ENCODE measurements at regions of chr5 and their contacts with region 1.

Region 1: GRCh38 chr5:122500245-122501075 is 188.4 kb downstream of the SNCAIP start:
- DNase-seq: peak; percentile 72
- ATAC-seq: peak; percentile 92
- H3K4me3 ChIP-seq: no peak overlapping the region
- H3K27ac ChIP-seq: no peak overlapping the region
- H3K4me1 ChIP-seq: peaks cover 2% of the 10 kb centered on the region; the same call in 1 of the 2 replicates
- H3K27me3 ChIP-seq: peaks cover 2% of the 10 kb centered on the region
- CTCF ChIP-seq: peak; percentile 70
- POLR2A ChIP-seq: no peak
- RAD21 ChIP-seq: peak; percentile 78

Region 2: DNA sequence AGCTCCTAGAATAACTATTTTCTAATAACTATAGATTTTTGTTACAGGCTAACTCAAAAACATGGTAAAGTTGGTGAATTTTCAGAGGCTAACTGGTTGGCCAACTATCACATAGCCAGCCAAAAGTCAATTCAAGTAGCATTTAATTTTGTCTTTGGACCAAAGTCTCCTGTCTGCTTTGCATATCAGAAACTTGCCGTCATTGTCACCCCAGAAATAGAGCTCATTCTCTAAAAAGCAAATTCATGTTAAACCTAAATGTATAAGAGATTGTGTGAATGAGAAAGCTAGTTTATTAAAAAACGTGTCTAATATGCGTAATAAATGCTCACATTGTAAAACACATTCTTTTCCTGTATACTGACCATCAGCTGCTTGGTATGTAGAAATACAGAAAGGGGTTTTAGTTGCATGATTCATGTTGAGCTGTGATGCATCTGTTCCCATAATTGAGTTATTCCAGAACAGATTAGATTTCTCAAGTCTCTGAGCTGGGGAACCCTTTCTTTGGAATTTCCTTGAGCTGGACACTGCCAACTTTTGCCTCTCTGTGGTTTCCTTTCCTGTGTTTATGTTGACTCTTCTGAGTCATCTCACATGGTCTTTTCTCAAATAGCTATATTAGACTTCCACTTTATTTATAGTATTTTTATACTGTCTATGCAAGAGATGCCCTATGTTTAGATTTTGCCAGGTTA is 531.4 kb before region 1 on chr5:
- CTCF ChIA-PET with region 1: no interaction called
- POLR2A ChIA-PET with region 1: no interaction called
- dilution Hi-C with region 1: no loop called
- in situ Hi-C with region 1: no loop called
- intact Hi-C with region 1: loop called (anchors 10 kb)
- DNase-seq: peak; percentile 100
- ATAC-seq: peak; percentile 94
- H3K4me3 ChIP-seq: no peak overlapping the region
- H3K27ac ChIP-seq: peak overlapping the region; percentile 39; the same call in 1 of the 2 replicates
- H3K4me1 ChIP-seq: peaks cover 6% of the 10 kb centered on the region
- H3K27me3 ChIP-seq: no peaks in the 10 kb centered on the region
- CTCF ChIP-seq: no peak
- POLR2A ChIP-seq: no peak
- RAD21 ChIP-seq: no peak; the same call in 1 of the 2 replicates

Region 3: DNA sequence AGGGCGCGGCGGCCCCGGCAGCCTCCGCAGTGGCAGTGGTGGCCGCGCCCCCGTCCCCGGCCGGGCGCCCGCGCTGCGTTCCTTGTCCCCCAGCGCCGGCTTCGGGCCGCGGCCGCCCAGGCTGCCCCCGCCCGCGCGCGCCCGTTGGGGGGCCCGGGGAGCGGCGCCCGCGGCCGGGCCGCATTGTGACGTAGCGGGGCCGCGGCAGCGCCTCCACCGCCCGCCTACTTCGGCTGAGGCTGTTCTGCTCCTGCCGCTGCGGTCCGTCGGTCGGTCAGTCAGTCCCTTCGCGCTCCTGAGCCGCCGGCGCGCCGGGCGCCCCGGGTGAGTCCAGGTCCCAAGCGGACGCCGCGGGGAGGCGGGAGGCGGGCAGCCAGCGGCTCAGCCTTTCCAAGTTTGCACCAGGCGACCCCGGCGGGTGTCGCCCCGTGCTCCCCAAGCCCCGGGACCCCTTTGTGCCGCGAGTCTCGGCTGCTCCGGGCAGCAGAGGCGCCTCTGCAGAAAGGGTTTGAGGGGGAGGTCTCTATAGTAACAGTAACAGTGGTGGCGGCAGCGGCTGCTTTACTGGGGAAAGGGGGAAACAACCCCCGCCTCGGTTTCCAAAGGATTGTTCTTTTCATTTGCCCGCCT is 188.4 kb before region 1 on chr5 and contains the start of gene SNCAIP:
- CTCF ChIA-PET with region 1: no interaction called
- POLR2A ChIA-PET with region 1: no interaction called
- dilution Hi-C with region 1: no loop called
- in situ Hi-C with region 1: no loop called
- intact Hi-C with region 1: loop called (anchors 2 kb)
- DNase-seq: peak; percentile 64
- ATAC-seq: peak; percentile 89
- H3K4me3 ChIP-seq: peak within 1 kb of the TSS; percentile 54
- H3K27ac ChIP-seq: peak within 1 kb of the TSS; percentile 53
- H3K4me1 ChIP-seq: peaks cover 4% of the 10 kb centered on the region; the same call in 1 of the 2 replicates
- H3K27me3 ChIP-seq: no peaks in the 10 kb centered on the region
- CTCF ChIP-seq: no peak
- POLR2A ChIP-seq: no peak
- RAD21 ChIP-seq: no peak
- total RNA-seq, gene SNCAIP: 19.0 and 22.5 TPM in 2 replicates

Region 4: GRCh38 chr5:122896598-122897282 is 396.3 kb after region 1 on chr5:
- CTCF ChIA-PET with region 1: no interaction called
- POLR2A ChIA-PET with region 1: no interaction called
- dilution Hi-C with region 1: no loop called
- in situ Hi-C with region 1: no loop called
- intact Hi-C with region 1: loop called (anchors 10 kb)
- DNase-seq: peak; percentile 85
- ATAC-seq: peak; percentile 91
- H3K4me3 ChIP-seq: no peak overlapping the region
- H3K27ac ChIP-seq: no peak overlapping the region
- H3K4me1 ChIP-seq: peaks cover 3% of the 10 kb centered on the region; the same call in 1 of the 2 replicates
- H3K27me3 ChIP-seq: no peaks in the 10 kb centered on the region; the same call in 1 of the 2 replicates
- CTCF ChIP-seq: peak; percentile 61
- POLR2A ChIP-seq: no peak
- RAD21 ChIP-seq: peak; percentile 65

Region 5: DNA sequence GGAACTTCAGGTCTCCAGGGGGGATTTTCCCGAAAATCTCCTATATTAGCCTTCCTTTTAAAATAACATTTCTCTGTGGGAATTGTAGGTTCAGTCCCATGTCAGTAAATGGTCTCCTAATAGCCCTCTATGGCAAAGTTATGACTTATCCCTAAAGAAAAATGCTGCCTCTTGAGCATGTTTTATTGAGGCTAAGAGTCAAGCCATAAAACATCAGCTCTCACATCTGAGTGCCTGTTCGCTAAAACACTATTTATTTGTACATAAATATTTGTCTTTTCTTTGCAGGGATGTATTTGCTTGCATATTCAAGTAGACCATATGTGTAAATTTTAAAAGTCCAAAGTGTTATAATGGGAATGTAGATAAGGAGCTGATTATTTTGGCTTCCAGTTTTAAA is 749.0 kb after region 1 on chr5:
- CTCF ChIA-PET with region 1: no interaction called
- POLR2A ChIA-PET with region 1: no interaction called
- dilution Hi-C with region 1: no loop called
- in situ Hi-C with region 1: no loop called
- intact Hi-C with region 1: no loop called
- DNase-seq: no peak
- ATAC-seq: no peak
- H3K4me3 ChIP-seq: no peak overlapping the region
- H3K27ac ChIP-seq: no peak overlapping the region
- H3K4me1 ChIP-seq: no peaks in the 10 kb centered on the region
- H3K27me3 ChIP-seq: no peaks in the 10 kb centered on the region
- CTCF ChIP-seq: no peak
- POLR2A ChIP-seq: no peak
- RAD21 ChIP-seq: no peak

Region 6: DNA sequence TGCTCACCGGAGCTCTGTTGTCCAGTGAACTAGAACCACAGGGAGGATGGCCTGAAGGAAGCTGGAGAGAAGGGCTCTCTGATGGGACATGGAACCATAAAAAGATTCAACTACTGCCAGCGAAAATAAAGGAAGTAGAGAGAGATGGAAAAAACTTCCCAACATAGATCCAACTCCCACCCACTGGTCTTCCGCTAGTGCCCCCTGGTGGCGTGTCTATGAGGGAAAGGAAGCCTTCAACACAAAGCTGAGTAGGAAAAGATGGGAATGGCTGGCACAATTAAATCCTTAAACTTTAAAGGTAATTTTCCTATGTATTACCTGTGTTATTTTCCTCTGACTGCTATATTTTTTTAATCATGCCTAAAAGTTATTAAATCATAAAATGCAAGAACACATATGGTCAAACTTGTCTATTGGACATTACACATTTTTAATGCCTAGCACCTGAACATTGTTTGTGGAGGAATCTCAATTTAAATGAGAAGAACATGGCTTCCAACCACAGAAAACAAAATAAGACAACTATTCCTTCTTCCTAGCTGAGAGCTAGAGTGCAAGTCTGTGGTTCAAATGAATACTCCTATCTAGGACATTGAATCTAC is 871.2 kb after region 1 on chr5:
- CTCF ChIA-PET with region 1: interaction called, 3 read pairs
- POLR2A ChIA-PET with region 1: no interaction called
- dilution Hi-C with region 1: no loop called
- in situ Hi-C with region 1: loop called (anchors 10 kb)
- intact Hi-C with region 1: loop called (anchors 5 kb)
- DNase-seq: peak; percentile 7
- ATAC-seq: no peak
- H3K4me3 ChIP-seq: no peak overlapping the region
- H3K27ac ChIP-seq: no peak overlapping the region
- H3K4me1 ChIP-seq: no peaks in the 10 kb centered on the region
- H3K27me3 ChIP-seq: no peaks in the 10 kb centered on the region
- CTCF ChIP-seq: peak; percentile 49
- POLR2A ChIP-seq: no peak
- RAD21 ChIP-seq: peak; percentile 40

Region 7: DNA sequence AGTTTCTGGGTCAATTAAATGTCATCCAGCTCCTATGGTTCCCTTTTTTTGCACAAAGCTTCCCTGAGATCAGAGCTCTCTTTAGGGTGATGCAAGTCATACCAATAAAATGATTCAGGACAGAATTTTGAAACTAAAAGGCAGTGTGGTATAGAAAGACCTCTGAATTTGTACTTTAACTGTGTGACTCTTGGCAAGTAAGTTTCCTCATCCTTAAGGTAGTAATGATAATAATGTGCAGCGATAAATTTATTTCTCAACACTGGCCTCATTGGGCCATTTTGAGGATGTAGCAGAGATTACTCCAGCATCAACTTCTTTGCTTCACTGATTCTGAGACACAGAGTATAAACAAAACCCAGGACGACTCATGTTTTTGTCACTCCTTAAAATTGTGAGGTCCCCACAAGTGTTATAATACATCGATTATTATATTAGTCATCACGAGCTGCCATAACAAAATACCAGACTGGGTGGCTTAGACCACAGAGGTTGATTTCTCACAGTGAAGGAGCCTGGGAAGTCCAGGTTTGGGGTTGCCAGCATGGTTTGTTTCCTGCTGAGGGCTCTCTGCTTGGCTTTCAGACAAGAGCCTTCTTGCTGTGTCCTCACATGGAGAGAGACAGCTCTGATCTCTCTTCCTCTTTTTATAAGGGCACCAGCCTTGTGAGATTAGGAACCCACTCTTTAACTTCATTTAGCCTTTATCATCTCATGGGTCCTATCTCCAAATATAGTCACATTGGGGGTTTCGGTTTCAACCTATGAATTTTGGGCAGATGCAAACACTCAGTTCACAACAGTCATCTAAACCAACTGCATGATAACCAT is 1953.0 kb after region 1 on chr5:
- CTCF ChIA-PET with region 1: no interaction called
- POLR2A ChIA-PET with region 1: no interaction called
- dilution Hi-C with region 1: no loop called
- in situ Hi-C with region 1: no loop called
- intact Hi-C with region 1: no loop called
- DNase-seq: peak; percentile 89
- ATAC-seq: peak; percentile 60
- H3K4me3 ChIP-seq: no peak overlapping the region
- H3K27ac ChIP-seq: 0 out of 2 replicates have a peak overlapping the region, but pooled peaks have one; percentile 34
- H3K4me1 ChIP-seq: peaks cover 16% of the 10 kb centered on the region
- H3K27me3 ChIP-seq: peaks cover 5% of the 10 kb centered on the region
- CTCF ChIP-seq: no peak
- POLR2A ChIP-seq: no peak
- RAD21 ChIP-seq: no peak

Measured in IMR-90 (cell line).